ENCODE measurements at regions of chr19 and their contacts with region 1.

Region 1: DNA sequence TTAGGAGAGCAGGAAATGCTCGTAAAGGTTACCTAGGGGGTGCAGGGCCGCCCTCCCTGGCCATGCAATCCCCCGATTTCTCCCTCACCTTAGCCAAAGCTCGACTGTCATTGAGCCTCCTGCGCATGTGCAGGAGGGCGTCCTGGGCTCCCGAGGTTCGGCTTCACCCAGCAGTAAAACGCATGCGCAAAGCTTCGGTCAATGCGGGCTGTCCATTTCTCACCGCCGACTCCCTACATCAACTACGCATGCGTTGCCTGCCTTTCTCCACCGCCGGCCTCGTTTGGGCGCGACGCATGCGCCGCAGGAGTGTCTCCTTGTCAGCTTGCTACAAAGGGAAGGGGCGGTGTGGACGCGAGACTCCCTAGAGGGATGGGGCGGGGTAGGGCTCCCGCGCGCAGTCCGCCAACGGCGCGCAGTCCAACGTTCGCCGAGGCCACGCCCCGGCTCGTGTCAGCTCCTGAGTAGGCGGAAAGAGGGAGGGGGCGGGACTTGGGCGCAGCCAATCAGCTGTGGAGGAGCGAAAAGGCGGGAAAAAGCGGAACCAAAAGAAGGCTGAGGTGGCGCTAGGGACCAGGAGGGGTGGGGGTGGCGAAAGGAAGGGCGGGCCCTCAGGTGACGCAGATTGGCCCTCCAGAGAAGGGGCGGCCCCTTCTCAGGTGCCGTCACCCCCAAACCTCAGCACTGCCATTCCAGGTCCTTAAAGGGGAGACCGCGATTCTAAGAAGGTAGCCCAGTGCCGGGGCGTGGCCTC is at the starts of genes SYNGR4 and TMEM143:
- DNase-seq: peak; percentile 93
- ATAC-seq: peak; percentile 92
- H3K4me3 Mint-ChIP-seq: peak within 1 kb of the TSS; percentile 87
- H3K27ac Mint-ChIP-seq: peak within 1 kb of the TSS; percentile 93
- H3K4me1 Mint-ChIP-seq: peaks cover 19% of the 10 kb centered on the region
- H3K27me3 Mint-ChIP-seq: no peaks in the 10 kb centered on the region
- CTCF ChIP-seq: no peak
- total RNA-seq, gene SYNGR4: not detected in 2 replicates
- total RNA-seq, gene TMEM143: 10.2 and 10.5 TPM in 2 replicates

Region 2: GRCh38 chr19:48085904-48086864 is 277.8 kb before region 1 on chr19:
- CTCF ChIA-PET with region 1: no interaction called
- POLR2A ChIA-PET with region 1: no interaction called
- intact Hi-C with region 1: no loop called
- DNase-seq: no peak
- ATAC-seq: no peak
- H3K4me3 Mint-ChIP-seq: no peak overlapping the region
- H3K27ac Mint-ChIP-seq: no peak overlapping the region
- H3K4me1 Mint-ChIP-seq: no peaks in the 10 kb centered on the region
- H3K27me3 Mint-ChIP-seq: peaks cover 7% of the 10 kb centered on the region
- CTCF ChIP-seq: no peak

Region 3: GRCh38 chr19:48170038-48170812 is 193.8 kb before region 1 on chr19 and contains the starts of genes LIG1 and ZSWIM9:
- CTCF ChIA-PET with region 1: no interaction called
- POLR2A ChIA-PET with region 1: interaction called, 6 read pairs
- intact Hi-C with region 1: loop called (anchors 1 kb)
- DNase-seq: peak; percentile 93
- ATAC-seq: peak; percentile 83
- H3K4me3 Mint-ChIP-seq: peak within 1 kb of the TSS; percentile 100
- H3K27ac Mint-ChIP-seq: peak within 1 kb of the TSS; percentile 99
- H3K4me1 Mint-ChIP-seq: peaks cover 21% of the 10 kb centered on the region
- H3K27me3 Mint-ChIP-seq: no peaks in the 10 kb centered on the region
- CTCF ChIP-seq: no peak
- total RNA-seq, gene LIG1: 41.8 and 42.9 TPM in 2 replicates
- total RNA-seq, gene ZSWIM9: 5.7 and 8.6 TPM in 2 replicates

Region 4: GRCh38 chr19:48391107-48391986 is 27.4 kb after region 1 on chr19 and contains the start of gene KDELR1:
- CTCF ChIA-PET with region 1: interaction called, 22 read pairs
- POLR2A ChIA-PET with region 1: interaction called, 30 read pairs
- intact Hi-C with region 1: loop called (anchors 1 kb)
- DNase-seq: peak; percentile 83
- ATAC-seq: peak; percentile 84
- H3K4me3 Mint-ChIP-seq: peak within 1 kb of the TSS; percentile 96
- H3K27ac Mint-ChIP-seq: peak within 1 kb of the TSS; percentile 88
- H3K4me1 Mint-ChIP-seq: peaks cover 35% of the 10 kb centered on the region
- H3K27me3 Mint-ChIP-seq: peaks cover 19% of the 10 kb centered on the region
- CTCF ChIP-seq: peak; percentile 51
- total RNA-seq, gene KDELR1: 50.8 and 51.9 TPM in 2 replicates

Region 5: GRCh38 chr19:48445606-48446481 is 81.9 kb after region 1 on chr19 and contains the start of gene GRWD1:
- CTCF ChIA-PET with region 1: no interaction called
- POLR2A ChIA-PET with region 1: interaction called, 7 read pairs
- intact Hi-C with region 1: loop called (anchors 1 kb)
- DNase-seq: peak; percentile 78
- ATAC-seq: peak; percentile 89
- H3K4me3 Mint-ChIP-seq: peak within 1 kb of the TSS; percentile 96
- H3K27ac Mint-ChIP-seq: peak within 1 kb of the TSS; percentile 95
- H3K4me1 Mint-ChIP-seq: peaks cover 35% of the 10 kb centered on the region
- H3K27me3 Mint-ChIP-seq: peaks cover 19% of the 10 kb centered on the region
- CTCF ChIP-seq: no peak
- total RNA-seq, gene GRWD1: 63.4 and 71.4 TPM in 2 replicates

Region 6: DNA sequence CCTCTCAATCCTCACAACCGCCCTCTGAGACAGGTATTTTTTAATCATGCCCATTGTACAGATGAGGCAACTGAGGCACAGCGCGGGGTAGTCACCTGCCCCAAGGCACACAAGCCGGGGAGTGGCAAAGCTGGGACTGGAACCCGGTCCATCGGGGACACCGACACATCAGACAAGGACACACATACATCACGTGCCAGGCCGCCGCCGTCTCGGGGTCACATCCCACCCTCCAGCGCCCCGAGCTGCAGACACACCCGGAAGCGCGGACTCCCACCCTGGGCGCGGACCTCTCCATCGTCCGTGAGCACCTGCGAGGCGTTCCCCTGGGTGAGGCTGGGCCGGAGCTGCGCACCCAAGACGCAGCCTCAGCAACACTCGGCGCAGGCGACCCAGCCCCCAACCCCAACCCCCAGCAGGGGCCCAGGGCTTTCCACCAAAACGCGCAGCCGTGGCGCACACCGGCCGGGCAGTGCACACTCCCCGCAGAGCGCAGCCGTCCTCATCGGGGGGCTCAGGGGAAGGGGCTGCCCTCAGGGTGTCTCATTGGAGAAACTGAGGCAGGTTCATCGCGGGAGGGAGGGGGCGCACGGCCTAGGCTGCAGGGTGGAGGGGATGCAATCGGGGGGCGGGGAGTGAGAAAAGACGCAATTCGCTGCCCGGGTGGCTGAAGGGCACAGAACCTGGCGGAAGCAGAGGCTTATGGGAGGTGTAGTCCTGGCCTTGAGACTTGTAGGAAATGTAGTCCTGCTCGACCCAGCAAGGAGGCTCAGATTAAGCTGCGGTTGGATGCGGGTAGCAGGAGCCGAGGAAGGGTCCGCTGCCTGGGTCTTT is 149.5 kb after region 1 on chr19:
- CTCF ChIA-PET with region 1: no interaction called
- POLR2A ChIA-PET with region 1: no interaction called
- intact Hi-C with region 1: loop called (anchors 1 kb)
- DNase-seq: peak; percentile 51
- ATAC-seq: peak; percentile 90
- H3K4me3 Mint-ChIP-seq: no peak overlapping the region
- H3K27ac Mint-ChIP-seq: peak overlapping the region; percentile 69
- H3K4me1 Mint-ChIP-seq: peaks cover 17% of the 10 kb centered on the region
- H3K27me3 Mint-ChIP-seq: peaks cover 2% of the 10 kb centered on the region
- CTCF ChIP-seq: no peak

Region 7: GRCh38 chr19:49497047-49497788 is 1133.2 kb after region 1 on chr19:
- CTCF ChIA-PET with region 1: no interaction called
- POLR2A ChIA-PET with region 1: no interaction called
- intact Hi-C with region 1: loop called (anchors 5 kb)
- DNase-seq: peak; percentile 55
- ATAC-seq: peak; percentile 7
- H3K4me3 Mint-ChIP-seq: peak overlapping the region; percentile 93
- H3K27ac Mint-ChIP-seq: peak overlapping the region; percentile 97
- H3K4me1 Mint-ChIP-seq: peaks cover 68% of the 10 kb centered on the region
- H3K27me3 Mint-ChIP-seq: no peaks in the 10 kb centered on the region
- CTCF ChIP-seq: no peak

Measured in activated B cell treated with CpG ODN at 0.5 μM for 24 hours (primary cell).